ENCODE measurements at regions of chr19 and their contacts with region 1.

Region 1: DNA sequence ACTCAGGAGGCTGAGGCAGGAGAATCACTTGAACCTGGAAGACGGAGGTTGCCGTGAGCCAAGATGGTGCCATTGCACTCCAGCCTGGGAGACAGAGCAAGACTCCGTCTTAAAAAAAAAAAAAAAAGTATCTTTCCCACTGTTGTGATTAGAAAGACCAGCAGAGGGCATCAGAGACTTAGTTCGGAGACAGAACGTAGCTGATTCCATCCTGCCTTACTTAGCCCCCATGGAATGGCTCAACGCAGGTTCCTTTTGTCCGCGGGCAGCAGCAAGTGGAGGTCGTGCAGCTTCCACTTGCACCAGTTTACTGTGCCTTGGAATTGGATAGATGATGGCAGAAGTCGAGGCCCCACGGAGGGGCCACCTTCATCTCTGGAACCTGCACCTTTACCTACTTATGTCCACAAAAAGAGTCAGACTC is 8.1 kb downstream of the TIMM29 start:
- DNase-seq: peak in 1 of 2 donors; percentile 61
- ATAC-seq: peak; percentile 69 to 87 (median 77)
- H3K4me3 ChIP-seq: peak overlapping the region in 2 of 10 donors; percentile 10 to 28
- H3K27ac ChIP-seq: peak overlapping the region in 1 of 10 donors; percentile 39
- H3K4me1 ChIP-seq: peaks cover 0 to 9% (median 3%) of the 10 kb centered on the region in 9 donors
- H3K27me3 ChIP-seq: no peaks in the 10 kb centered on the region
- CTCF ChIP-seq: peak; percentile 32 to 70 (median 62)

Region 2: DNA sequence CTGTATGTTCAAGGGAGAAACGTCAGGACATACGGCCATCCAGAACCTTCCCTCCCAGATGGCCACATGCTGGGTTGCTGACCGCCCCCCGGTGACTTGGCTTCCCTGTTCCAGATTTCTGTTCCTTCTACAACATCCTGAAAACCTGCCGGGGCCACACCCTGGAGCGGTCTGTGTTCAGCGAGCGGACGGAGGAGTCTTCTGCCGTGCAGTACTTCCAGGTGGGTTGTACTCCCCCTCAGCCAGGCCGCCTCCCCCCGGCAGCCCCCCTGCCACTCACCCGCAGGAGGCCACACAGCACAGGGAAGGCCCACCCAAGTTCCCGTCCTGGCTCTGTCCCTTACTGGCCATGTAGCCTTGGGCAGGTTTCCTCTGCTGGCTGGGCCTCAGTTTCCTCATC is 28.7 kb before region 1 on chr19:
- intact Hi-C with region 1: no loop called
- DNase-seq: no peak
- ATAC-seq: no peak
- H3K4me3 ChIP-seq: no peak overlapping the region
- H3K27ac ChIP-seq: no peak overlapping the region
- H3K4me1 ChIP-seq: no peaks in the 10 kb centered on the region
- H3K27me3 ChIP-seq: no peaks in the 10 kb centered on the region
- CTCF ChIP-seq: no peak

Region 3: DNA sequence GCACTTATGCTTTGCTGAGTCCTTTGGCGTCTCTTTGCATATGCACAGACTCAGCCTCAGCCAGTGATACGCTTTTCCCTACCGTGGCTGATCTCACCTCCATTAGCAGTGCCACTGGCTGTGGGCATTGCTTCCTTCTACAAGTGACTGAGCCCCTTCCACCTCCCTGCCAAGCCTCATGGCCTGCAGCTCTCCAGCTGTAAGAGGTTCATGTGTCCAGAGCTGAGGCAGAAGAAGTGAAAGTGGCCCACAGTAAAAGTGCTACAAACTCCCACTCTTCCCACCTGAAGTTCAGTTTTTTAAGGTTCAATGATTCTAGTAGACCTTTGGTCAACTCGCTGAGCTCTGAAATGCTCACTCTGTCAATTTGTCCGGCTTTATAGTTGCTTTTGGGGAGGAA is 68.8 kb after region 1 on chr19:
- intact Hi-C with region 1: loop called in 3 of 10 experiments (anchors 10 kb)
- DNase-seq: no peak
- ATAC-seq: no peak
- H3K4me3 ChIP-seq: no peak overlapping the region
- H3K27ac ChIP-seq: no peak overlapping the region
- H3K4me1 ChIP-seq: no peaks in the 10 kb centered on the region
- H3K27me3 ChIP-seq: no peaks in the 10 kb centered on the region
- CTCF ChIP-seq: no peak

Region 4: DNA sequence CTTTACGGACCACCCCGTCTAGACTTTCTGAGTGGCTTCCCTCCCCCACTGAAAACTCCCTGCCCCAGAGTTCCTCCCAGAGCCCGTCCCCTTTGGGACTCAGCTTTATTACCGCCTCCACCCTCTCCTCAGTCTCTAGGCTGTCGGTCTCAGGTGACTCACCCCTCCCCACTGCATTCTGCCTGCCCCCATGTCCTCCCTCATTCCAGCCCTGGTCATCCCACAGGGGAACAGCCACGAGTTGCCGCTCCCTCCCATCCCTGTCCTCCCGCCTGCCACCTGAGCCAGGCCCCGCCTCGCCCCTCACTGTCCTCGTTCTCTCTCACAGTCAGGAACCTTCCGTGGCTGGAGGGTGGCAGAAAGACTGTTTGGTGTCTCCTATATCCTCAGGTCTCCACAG is 81.5 kb after region 1 on chr19:
- intact Hi-C with region 1: loop called in 2 of 10 experiments (anchors 10 kb)
- DNase-seq: no peak
- ATAC-seq: no peak
- H3K4me3 ChIP-seq: no peak overlapping the region
- H3K27ac ChIP-seq: no peak overlapping the region
- H3K4me1 ChIP-seq: peaks cover 0 to 12% (median 0%) of the 10 kb centered on the region in 9 donors
- H3K27me3 ChIP-seq: no peaks in the 10 kb centered on the region
- CTCF ChIP-seq: no peak

Region 5: GRCh38 chr19:11125994-11126685 is 189.5 kb after region 1 on chr19:
- intact Hi-C with region 1: loop called in 3 of 10 experiments (anchors 5 to 10 kb)
- DNase-seq: peak; percentile 76 to 79
- ATAC-seq: peak in 7 of 8 donors; percentile 62 to 80 (median 71)
- H3K4me3 ChIP-seq: no peak overlapping the region
- H3K27ac ChIP-seq: peak overlapping the region in 2 of 10 donors; percentile 7 to 29
- H3K4me1 ChIP-seq: peaks cover under 1 to 21% (median 9%) of the 10 kb centered on the region in 9 donors
- H3K27me3 ChIP-seq: no peaks in the 10 kb centered on the region
- CTCF ChIP-seq: peak; percentile 71 to 86 (median 79)